Heart right ventricle (tissue), 16 donors: ENCODE measurements at regions of chr4 and their contacts with region 1.

Region 1: GRCh38 chr4:82865592-82865991 is 25.4 kb downstream of the SEC31A start:
- DNase-seq: no peak
- ATAC-seq: peak in 5 of 8 donors; percentile 27 to 55 (median 52)
- H3K4me3 ChIP-seq: no peak overlapping the region
- H3K27ac ChIP-seq: peak overlapping the region in 4 of 10 donors; percentile 4 to 66 (median 32)
- H3K4me1 ChIP-seq: peaks cover 0 to 21% (median 9%) of the 10 kb centered on the region in 9 donors
- H3K27me3 ChIP-seq: no peaks in the 10 kb centered on the region
- CTCF ChIP-seq: no peak

Region 2: DNA sequence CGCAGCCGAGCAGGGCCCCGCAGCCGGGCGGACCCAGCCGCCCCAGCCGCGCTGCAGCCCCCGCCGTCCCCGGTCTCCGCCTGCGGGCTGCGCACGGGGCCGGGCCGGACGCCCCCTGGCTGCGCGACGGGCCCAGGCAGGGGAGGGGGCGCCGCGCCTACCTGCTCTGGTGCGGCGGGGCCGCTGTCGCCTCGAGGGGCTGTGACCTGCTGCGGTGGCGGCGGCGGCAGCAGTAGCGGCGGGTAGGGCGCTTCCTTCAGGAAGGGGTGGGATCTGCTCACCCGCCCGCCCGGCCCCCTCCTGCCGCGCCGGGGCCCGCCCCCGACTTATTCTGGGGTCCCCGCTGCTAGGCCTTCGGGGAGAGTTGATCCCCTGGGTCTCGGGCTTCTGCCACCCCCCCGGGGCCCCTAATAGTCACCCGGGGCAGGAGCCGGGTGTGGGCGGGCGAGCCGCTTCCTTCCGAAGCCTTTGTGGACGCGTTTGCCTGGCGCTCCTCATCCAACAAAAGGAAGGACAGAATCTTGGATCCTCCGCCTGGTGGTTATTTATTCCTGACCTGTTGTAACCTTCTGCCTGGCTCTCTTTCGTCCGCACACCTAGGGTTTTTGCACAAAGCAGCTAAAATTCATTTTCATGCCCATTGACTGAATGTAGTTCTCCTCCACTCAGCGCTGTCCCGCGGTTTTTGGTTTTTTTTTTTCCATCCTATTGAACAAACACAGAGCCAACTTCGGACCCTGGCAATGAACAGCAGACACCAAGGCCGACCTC is 303.7 kb before region 1 on chr4 and contains the start of gene TMEM150C:
- intact Hi-C with region 1: no loop called
- DNase-seq: peak; percentile 34 to 62
- ATAC-seq: peak; percentile 76 to 92 (median 85)
- H3K4me3 ChIP-seq: peak within 1 kb of the TSS; percentile 62 to 91 (median 72)
- H3K27ac ChIP-seq: peak within 1 kb of the TSS in 9 of 10 donors; percentile 65 to 85 (median 74)
- H3K4me1 ChIP-seq: peaks cover 0 to 26% (median 11%) of the 10 kb centered on the region in 9 donors
- H3K27me3 ChIP-seq: peaks cover 0 to 41% (median 0%) of the 10 kb centered on the region in 7 donors
- CTCF ChIP-seq: peak in 7 of 9 donors; percentile 5 to 51 (median 24)
- total RNA-seq, gene TMEM150C: 8.5 to 22.7 (median 12.6) TPM

Region 3: DNA sequence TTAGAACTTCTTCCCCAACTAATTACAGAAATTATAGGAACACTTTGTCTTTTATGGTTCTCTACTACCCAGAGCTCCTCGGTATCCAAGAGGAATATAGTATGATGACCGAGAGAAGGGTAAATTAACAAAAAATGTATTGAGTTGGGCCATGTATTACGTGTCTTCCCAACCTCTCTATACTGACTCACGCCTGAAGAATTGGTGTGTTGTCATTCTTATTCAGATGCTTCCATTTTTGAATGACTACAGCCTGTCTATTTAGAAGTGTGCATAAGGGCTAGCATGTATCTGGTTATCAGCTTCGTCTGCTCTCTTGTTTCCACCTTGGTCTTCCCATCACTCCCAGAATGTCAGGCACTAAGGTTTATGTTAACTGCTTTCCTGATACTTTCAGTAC is 42.5 kb before region 1 on chr4:
- intact Hi-C with region 1: loop called in 3 of 10 experiments (anchors 5 to 10 kb)
- DNase-seq: no peak
- ATAC-seq: no peak
- H3K4me3 ChIP-seq: no peak overlapping the region
- H3K27ac ChIP-seq: no peak overlapping the region
- H3K4me1 ChIP-seq: no peaks in the 10 kb centered on the region
- H3K27me3 ChIP-seq: no peaks in the 10 kb centered on the region
- CTCF ChIP-seq: no peak

Region 4: DNA sequence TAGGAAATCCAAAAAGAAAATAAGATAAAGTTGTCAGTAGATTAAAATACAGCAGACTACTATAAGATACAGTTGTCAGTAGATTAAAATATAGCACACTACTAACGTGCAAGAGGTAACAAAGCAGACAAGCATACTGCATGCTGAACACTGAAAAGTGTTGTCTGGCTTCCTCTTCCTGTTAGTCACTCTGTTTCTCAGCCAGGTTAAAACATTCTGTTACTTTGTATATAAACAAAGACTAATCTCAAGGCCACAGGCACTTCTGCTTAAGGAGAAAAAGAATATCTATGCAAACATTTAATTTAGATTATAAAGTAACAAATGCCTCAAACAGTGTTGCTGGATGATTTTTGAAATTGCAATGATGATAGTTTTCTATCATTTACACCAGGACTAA is 26.0 kb before region 1 on chr4:
- intact Hi-C with region 1: loop called in 1 of 10 experiments (anchors 5 kb)
- DNase-seq: no peak
- ATAC-seq: no peak
- H3K4me3 ChIP-seq: no peak overlapping the region
- H3K27ac ChIP-seq: no peak overlapping the region
- H3K4me1 ChIP-seq: peaks cover 0 to 3% (median 0%) of the 10 kb centered on the region in 9 donors
- H3K27me3 ChIP-seq: no peaks in the 10 kb centered on the region
- CTCF ChIP-seq: no peak